PC-9 (cell line): ENCODE measurements at regions of chr7 and their contacts with region 1.

Region 1: GRCh38 chr7:77940647-77941046 is 142.1 kb downstream of the PHTF2 start:
- DNase-seq: peak in 1 of 2 experiments; percentile 31
- H3K4me3 ChIP-seq: no peak overlapping the region
- H3K27ac ChIP-seq: no peak overlapping the region
- H3K4me1 ChIP-seq: no peaks in the 10 kb centered on the region
- H3K27me3 ChIP-seq: no peaks in the 10 kb centered on the region
- CTCF ChIP-seq: peak; percentile 82

Region 2: GRCh38 chr7:77679615-77680014 is 261.0 kb before region 1 on chr7:
- CTCF ChIA-PET with region 1: no interaction called
- POLR2A ChIA-PET with region 1: no interaction called
- intact Hi-C with region 1: no loop called
- DNase-seq: peak in 1 of 2 experiments; percentile 86
- H3K4me3 ChIP-seq: peak overlapping the region; percentile 31; the same call in 1 of the 2 replicates
- H3K27ac ChIP-seq: peak overlapping the region; percentile 68
- H3K4me1 ChIP-seq: peaks cover 28% of the 10 kb centered on the region
- H3K27me3 ChIP-seq: no peaks in the 10 kb centered on the region
- CTCF ChIP-seq: no peak

Region 3: DNA sequence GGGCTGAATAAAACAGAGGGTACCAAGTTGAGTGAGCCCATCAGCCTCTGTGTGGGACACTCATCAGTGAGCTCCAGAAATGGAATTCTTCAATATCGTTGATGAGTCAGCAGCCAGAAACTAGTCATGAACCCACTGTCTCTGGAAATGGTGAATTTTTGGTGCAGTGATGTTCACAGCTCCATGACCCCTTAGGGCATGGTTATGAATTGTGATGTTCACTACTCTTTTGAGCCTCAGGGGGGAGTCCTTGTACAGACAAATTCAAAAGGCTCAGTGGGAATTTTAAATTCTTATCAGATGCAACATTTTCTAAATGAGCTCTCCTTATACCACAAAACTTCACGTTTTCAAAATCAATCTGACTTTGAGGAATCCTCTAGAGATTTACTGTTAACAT is 193.6 kb after region 1 on chr7:
- CTCF ChIA-PET with region 1: no interaction called
- POLR2A ChIA-PET with region 1: no interaction called
- intact Hi-C with region 1: loop called (anchors 5 kb)
- DNase-seq: peak in 1 of 2 experiments; percentile 10
- H3K4me3 ChIP-seq: no peak overlapping the region
- H3K27ac ChIP-seq: no peak overlapping the region
- H3K4me1 ChIP-seq: no peaks in the 10 kb centered on the region
- H3K27me3 ChIP-seq: peaks cover 9% of the 10 kb centered on the region; the same call in 1 of the 2 replicates
- CTCF ChIP-seq: peak; percentile 46

Region 4: GRCh38 chr7:78226059-78226719 is 285.5 kb after region 1 on chr7:
- CTCF ChIA-PET with region 1: no interaction called
- POLR2A ChIA-PET with region 1: no interaction called
- intact Hi-C with region 1: loop called (anchors 2 kb)
- DNase-seq: peak in 1 of 2 experiments; percentile 35
- H3K4me3 ChIP-seq: no peak overlapping the region
- H3K27ac ChIP-seq: no peak overlapping the region
- H3K4me1 ChIP-seq: no peaks in the 10 kb centered on the region
- H3K27me3 ChIP-seq: no peaks in the 10 kb centered on the region
- CTCF ChIP-seq: peak; percentile 57

Region 5: GRCh38 chr7:78420001-78420400 is 479.4 kb after region 1 on chr7:
- CTCF ChIA-PET with region 1: no interaction called
- POLR2A ChIA-PET with region 1: no interaction called
- intact Hi-C with region 1: no loop called
- DNase-seq: no peak
- H3K4me3 ChIP-seq: no peak overlapping the region
- H3K27ac ChIP-seq: no peak overlapping the region
- H3K4me1 ChIP-seq: no peaks in the 10 kb centered on the region
- H3K27me3 ChIP-seq: no peaks in the 10 kb centered on the region
- CTCF ChIP-seq: no peak

Region 6: DNA sequence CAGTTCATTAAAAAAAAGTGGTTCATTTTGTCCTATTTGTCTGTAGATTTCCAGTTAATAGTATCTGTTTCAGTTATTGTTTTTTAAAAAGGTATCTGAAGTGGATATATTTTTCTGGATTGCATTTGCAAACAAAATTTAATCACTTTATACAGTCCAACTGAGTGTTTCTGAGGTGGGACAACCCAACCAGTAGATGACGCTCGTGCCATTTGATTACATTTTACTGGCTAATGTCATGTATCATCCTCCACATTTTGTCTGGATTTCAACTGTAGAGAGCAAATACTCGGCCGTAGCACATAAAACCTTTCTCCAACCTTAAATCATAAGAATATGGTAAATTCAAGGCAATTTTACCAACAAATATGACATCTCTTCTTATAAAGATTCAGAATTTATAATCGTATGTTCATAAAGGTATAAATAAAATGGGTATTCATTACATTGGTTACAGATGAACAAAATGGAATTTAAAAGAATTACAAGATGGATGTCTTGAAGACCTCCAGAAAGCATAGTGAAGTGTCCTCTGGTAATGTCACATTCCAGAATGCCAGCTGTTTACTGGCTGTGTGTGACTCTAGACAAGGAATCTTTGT is 646.9 kb after region 1 on chr7:
- CTCF ChIA-PET with region 1: no interaction called
- POLR2A ChIA-PET with region 1: no interaction called
- intact Hi-C with region 1: loop called (anchors 10 kb)
- DNase-seq: peak in 1 of 2 experiments; percentile 18
- H3K4me3 ChIP-seq: no peak overlapping the region
- H3K27ac ChIP-seq: no peak overlapping the region
- H3K4me1 ChIP-seq: no peaks in the 10 kb centered on the region
- H3K27me3 ChIP-seq: no peaks in the 10 kb centered on the region
- CTCF ChIP-seq: peak; percentile 53